ENCODE measurements at regions of chr5 and their contacts with region 1.

Region 1: DNA sequence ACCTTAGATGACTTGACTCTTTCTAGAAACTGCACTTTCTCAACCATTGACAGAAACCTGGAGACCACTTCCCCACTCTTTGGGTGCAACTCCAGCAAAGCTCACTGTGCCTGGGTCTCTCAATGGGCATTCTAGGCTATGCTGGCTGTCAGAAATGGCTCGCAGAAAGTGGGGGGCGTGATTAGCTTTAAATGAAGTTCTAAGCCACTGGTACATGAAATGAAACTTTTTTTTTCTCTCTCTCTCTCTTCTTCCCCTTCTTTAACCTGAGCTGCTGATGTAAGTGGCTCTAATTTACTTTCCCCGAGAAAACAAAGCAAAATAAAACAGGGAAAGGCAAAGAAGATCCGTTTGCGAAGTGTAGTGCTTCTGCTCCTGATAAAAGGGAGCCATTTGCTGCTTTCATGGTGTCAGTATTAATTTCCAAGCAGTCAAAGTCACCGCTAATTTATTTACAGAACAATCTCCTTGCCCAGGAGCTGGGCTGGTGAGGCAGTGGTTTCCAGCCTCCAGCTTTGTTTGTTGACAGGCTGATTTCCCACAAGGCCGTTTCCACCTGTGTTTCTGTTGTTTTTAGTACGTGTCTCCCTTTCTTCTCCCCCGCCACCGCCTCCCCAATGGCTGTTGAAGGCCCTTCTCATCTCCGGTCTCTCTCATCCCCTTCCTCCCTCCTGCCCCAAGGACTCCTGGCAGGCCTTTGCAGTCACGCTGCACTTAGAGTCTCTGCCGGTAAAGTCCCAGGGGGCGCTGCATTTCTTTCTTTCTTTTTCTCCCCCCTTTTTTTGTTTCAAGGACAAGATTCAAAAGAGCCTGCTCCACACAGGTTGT is 422.9 kb downstream of the EBF1 start:
- DNase-seq: peak; percentile 85
- H3K4me3 ChIP-seq: peak overlapping the region; percentile 48
- H3K27ac ChIP-seq: peak overlapping the region; percentile 73
- H3K4me1 ChIP-seq: peaks cover 30% of the 10 kb centered on the region
- CTCF ChIP-seq: peak; percentile 93

Region 2: DNA sequence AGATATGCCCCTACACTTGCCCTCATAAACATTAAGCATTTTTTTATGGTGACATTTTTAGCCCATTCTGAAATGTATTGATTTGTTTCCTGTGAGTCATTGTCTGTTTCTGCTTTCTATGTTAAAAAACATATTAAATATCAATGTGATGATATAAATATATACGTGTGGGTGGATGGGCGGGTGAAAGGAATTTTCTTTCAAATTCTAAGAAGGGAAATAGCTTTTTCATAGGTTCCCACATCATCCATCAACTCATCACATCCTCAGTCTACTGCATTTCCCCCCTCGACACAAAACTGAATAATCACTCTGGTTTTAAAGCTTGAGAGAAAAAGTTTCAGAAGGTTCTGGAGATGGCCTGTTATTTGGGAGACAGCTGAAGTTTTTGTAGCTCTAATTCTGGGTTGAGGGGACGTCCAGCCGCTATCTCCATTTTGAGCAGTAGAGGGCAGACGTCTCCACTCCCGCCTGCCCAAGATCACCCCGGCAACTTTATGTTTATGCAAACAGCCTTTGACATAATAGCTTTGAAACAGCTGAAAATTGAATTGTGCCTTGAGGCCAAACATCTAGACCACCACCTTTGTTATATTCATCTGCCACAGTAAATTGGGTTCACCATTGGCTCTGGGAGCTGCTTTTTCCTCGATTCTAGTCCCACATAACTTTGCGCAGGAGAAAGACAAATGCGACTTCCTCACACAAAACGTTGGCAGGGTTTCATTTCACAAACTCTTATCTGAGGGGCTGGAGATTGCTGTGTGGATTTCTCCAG is 601.7 kb before region 1 on chr5:
- CTCF ChIA-PET with region 1: no interaction called
- POLR2A ChIA-PET with region 1: no interaction called
- intact Hi-C with region 1: loop called (anchors 5 kb)
- DNase-seq: peak; percentile 69
- H3K4me3 ChIP-seq: no peak overlapping the region
- H3K27ac ChIP-seq: no peak overlapping the region
- H3K4me1 ChIP-seq: peaks cover 4% of the 10 kb centered on the region
- CTCF ChIP-seq: peak; percentile 98

Region 3: GRCh38 chr5:158599157-158599556 is 77.7 kb before region 1 on chr5:
- CTCF ChIA-PET with region 1: no interaction called
- POLR2A ChIA-PET with region 1: no interaction called
- intact Hi-C with region 1: loop called (anchors 5 kb)
- DNase-seq: peak; percentile 34
- H3K4me3 ChIP-seq: no peak overlapping the region
- H3K27ac ChIP-seq: no peak overlapping the region
- H3K4me1 ChIP-seq: peaks cover 18% of the 10 kb centered on the region
- CTCF ChIP-seq: no peak

Measured in OCI-LY7 (cell line).